Posterior cingulate gyrus (tissue), 11 donors: ENCODE measurements at regions of chr12 and their contacts with region 1.

Region 1: DNA sequence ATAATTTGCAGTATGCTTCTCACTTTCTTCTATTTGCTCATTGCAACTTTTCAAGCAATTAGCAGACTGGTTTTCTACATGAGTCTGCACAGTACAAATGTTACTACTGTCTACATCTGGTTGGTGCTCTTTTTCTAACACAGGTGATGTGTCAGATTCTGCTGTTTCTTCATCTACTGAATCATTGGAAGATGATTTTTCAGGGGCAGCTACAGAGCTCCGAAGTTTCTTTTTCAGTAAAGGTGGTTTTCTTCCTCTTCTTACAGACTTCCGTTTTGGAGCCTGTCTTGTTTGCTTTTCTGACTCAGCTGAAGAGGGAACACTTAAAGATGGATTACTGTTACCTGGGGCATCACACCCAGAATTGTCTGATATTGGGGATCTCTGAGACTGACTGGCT is 62.1 kb downstream of the SCAF11 start:
- DNase-seq: no peak

Region 2: DNA sequence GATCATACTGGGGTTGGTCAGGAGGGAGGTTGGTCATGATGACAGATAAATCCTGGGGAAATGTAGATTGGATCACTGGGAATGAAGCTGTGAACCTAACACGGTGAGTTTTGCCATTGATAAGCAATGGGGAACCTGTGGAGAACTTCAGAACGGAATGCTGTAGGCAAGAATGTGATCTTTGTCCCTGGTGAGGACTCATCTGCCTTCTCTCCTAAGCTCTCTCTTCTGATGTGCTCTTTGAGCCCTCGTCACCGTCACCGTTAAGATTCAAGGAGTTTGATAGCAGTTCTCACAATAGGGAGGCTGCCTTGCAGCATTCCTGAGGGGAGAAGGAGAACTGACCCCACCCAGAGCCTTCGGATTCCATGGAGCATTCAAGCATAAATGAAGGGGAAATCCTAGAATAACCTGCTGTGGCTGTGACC is 494.9 kb before region 1 on chr12:
- intact Hi-C with region 1: loop called (anchors 5 kb)
- DNase-seq: no peak

Region 3: GRCh38 chr12:46049665-46050064 is 121.4 kb after region 1 on chr12:
- intact Hi-C with region 1: no loop called
- DNase-seq: no peak